CD4-positive, alpha-beta T cell (primary cell): ENCODE measurements at regions of chr1 and their contacts with region 1.

Region 1: GRCh38 chr1:98292994-98293393 is 368.5 kb upstream of the SNX7 start:
- DNase-seq: no peak
- ATAC-seq: no peak
- H3K4me3 ChIP-seq: no peak overlapping the region
- H3K4me3 Mint-ChIP-seq: no peak overlapping the region
- H3K27ac ChIP-seq: no peak overlapping the region
- H3K27ac Mint-ChIP-seq: no peak overlapping the region
- H3K4me1 ChIP-seq: no peaks in the 10 kb centered on the region
- H3K4me1 Mint-ChIP-seq: no peaks in the 10 kb centered on the region
- H3K27me3 ChIP-seq: no peaks in the 10 kb centered on the region
- H3K27me3 Mint-ChIP-seq: no peaks in the 10 kb centered on the region
- CTCF ChIP-seq: no peak

Region 2: DNA sequence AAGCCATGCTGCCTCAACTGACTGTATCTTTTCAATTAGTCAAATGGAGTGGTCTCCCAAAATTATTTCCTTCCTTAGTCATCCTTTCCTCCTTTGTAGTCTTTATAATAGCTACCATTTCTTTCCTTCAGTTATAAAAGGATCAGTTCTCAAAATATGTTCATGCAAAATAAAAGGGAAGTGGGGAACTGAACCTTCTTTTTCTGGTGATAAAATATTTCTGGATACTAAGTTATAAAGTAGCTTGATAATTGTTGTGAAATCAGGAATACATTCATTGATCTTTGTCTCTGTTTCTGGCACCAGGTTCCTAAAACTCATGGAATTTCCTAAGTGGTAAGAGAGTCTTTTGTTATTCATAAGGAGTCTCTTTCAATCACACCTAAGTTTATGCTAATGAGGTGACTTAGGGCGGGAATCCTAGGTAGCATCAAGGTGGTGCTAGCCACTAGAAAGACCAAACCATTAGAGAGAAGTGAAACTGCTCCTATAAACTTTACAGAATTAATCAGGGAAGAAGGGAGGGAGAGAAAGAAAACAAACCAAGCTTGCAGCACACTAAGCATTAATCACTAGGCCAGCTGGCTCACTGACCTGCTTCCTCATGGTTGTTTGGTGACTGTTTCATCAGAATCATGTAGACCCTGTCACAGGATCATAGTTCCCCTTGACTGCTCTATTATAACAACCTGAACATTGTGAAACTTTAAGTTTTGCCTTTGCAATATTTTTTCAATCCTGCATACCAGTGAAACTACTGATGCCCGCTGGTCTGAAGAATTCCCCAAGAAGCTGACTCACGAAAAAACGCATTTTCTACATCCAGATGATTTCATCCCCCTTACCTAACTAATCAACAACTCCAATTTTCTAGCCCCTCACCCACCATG is 1733.0 kb before region 1 on chr1:
- CTCF ChIA-PET with region 1: no interaction called
- POLR2A ChIA-PET with region 1: no interaction called
- intact Hi-C with region 1: loop called in 1 of 2 experiments (anchors 10 kb)
- DNase-seq: peak in 2 of 14 experiments; percentile 20 to 29
- ATAC-seq: no peak
- H3K4me3 ChIP-seq: no peak overlapping the region
- H3K4me3 Mint-ChIP-seq: no peak overlapping the region
- H3K27ac ChIP-seq: no peak overlapping the region
- H3K27ac Mint-ChIP-seq: no peak overlapping the region
- H3K4me1 ChIP-seq: no peaks in the 10 kb centered on the region
- H3K4me1 Mint-ChIP-seq: no peaks in the 10 kb centered on the region
- H3K27me3 ChIP-seq: no peaks in the 10 kb centered on the region
- H3K27me3 Mint-ChIP-seq: peaks cover 6% of the 10 kb centered on the region
- CTCF ChIP-seq: no peak